ENCODE measurements at regions of chr12 and their contacts with region 1.

Region 1: DNA sequence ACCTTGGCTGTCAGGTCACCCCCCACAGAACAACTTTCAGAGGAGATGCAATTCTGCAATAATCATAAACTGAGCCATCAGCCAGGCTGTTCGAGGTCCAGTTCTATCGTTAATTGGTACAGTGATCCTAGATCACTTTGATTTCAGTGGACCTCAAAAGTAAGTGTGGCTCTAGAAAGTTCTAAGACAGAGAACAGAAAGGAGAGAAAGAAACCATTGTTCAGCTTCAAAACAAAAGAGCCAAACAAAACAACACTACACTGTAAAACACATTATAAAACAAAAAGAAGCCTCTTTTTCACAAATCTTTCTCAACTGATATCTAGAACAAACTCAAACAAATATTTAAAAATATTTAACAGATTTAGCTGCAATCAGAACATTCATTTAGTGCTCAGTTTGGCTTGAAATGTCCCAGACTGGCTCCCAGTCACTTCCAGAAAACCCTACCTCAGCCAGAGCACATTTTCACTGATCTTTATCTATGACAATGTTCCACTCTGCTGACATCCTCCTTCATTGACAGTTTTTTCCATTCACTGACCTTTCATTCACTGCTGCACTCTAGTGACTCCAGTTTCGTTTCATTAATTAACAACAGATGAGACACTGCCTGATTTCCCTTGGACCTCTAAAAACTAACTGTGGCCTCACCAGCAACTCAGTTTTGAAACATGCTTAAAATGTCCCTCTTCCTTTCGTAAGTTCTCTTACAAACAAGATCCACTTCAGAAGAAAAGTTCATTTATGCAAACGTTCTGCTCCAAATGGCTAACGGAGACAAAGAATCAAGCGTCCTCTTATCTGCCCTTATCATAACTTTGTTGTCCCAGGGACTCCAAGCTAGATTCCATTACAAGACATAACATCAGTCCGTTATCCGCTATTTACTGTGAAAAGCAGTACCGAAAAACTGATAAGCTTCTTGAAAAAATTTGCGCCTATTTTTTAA is 56.8 kb downstream of the DUSP16 start:
- DNase-seq: peak; percentile 63
- H3K4me3 Mint-ChIP-seq: peak overlapping the region; percentile 63
- H3K27ac Mint-ChIP-seq: peak overlapping the region; percentile 95
- H3K4me1 Mint-ChIP-seq: peaks cover 57% of the 10 kb centered on the region
- H3K27me3 Mint-ChIP-seq: no peaks in the 10 kb centered on the region

Region 2: DNA sequence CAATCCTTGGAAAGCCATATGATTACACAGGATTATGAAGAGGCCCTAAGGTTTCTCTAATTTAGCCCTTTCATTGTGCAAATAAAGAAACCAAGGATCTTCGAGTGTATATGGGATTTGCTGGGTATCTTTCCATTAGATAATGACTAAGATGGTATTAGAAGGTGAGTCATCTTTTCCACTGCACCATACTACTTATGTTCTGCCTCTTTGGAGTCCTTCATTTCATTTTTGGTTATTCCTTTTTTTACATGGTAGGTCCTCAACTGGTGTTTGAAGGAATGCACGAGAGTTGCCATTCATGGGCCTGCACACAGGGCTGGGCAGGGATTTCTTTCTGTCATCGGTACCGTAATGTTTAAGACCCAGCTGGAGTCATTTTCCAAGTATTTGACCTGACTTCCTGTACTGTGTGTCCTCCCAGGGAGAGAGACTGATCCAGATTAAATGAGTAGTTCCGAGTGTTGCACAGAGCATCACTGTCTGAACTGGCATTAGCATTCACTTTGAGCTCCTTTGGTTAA is 63.2 kb before region 1 on chr12:
- CTCF ChIA-PET with region 1: interaction called, 5 read pairs
- POLR2A ChIA-PET with region 1: interaction called, 9 read pairs
- intact Hi-C with region 1: loop called (anchors 1 kb)
- DNase-seq: no peak
- H3K4me3 Mint-ChIP-seq: peak overlapping the region; percentile 30
- H3K27ac Mint-ChIP-seq: peak overlapping the region; percentile 91
- H3K4me1 Mint-ChIP-seq: peaks cover 88% of the 10 kb centered on the region
- H3K27me3 Mint-ChIP-seq: no peaks in the 10 kb centered on the region

Region 3: GRCh38 chr12:12467688-12468261 is 38.0 kb before region 1 on chr12:
- CTCF ChIA-PET with region 1: interaction called, 12 read pairs
- POLR2A ChIA-PET with region 1: interaction called, 45 read pairs
- intact Hi-C with region 1: no loop called
- DNase-seq: peak; percentile 80
- H3K4me3 Mint-ChIP-seq: peak overlapping the region; percentile 49
- H3K27ac Mint-ChIP-seq: peak overlapping the region; percentile 97
- H3K4me1 Mint-ChIP-seq: peaks cover 84% of the 10 kb centered on the region
- H3K27me3 Mint-ChIP-seq: no peaks in the 10 kb centered on the region

Region 4: DNA sequence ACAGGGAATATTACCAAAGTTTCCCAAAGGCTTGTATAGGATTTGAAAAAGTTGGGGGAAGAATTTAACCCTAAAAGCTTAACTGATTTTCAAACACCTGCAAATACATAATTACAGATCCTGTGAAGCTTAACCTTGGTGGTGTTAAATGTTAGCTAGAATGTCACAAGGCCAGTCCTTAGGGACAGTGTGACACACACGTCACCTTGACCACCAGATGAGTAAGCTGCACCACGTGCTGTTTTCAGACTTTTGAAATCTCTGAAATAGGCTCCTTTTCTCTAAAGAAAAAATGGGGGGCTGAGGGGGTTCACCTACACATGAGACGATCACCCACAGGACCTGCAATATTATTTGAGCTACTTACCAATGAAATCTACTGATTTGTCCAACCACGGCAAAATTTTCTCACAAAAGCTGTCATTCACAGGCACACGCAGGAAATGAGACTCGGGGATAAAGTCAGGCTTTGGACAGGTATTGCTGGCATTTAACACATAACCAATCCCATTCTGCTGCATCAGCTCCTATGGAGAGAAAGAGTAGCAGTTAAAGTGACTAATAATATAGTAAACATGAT is 19.1 kb before region 1 on chr12:
- CTCF ChIA-PET with region 1: interaction called, 25 read pairs
- POLR2A ChIA-PET with region 1: interaction called, 76 read pairs
- intact Hi-C with region 1: loop called (anchors 1 kb)
- DNase-seq: peak; percentile 59
- H3K4me3 Mint-ChIP-seq: peak overlapping the region; percentile 6
- H3K27ac Mint-ChIP-seq: peak overlapping the region; percentile 99
- H3K4me1 Mint-ChIP-seq: peaks cover 56% of the 10 kb centered on the region
- H3K27me3 Mint-ChIP-seq: no peaks in the 10 kb centered on the region

Region 5: GRCh38 chr12:12611512-12612306 is 105.9 kb after region 1 on chr12 and contains the start of gene CREBL2:
- CTCF ChIA-PET with region 1: no interaction called
- POLR2A ChIA-PET with region 1: no interaction called
- intact Hi-C with region 1: loop called (anchors 2 kb)
- DNase-seq: peak; percentile 92
- H3K4me3 Mint-ChIP-seq: peak within 1 kb of the TSS; percentile 82
- H3K27ac Mint-ChIP-seq: peak within 1 kb of the TSS; percentile 95
- H3K4me1 Mint-ChIP-seq: peaks cover 54% of the 10 kb centered on the region
- H3K27me3 Mint-ChIP-seq: no peaks in the 10 kb centered on the region
- total RNA-seq, gene CREBL2: 30.4 to 32.2 TPM

Region 6: GRCh38 chr12:12696562-12697383 is 191.0 kb after region 1 on chr12:
- CTCF ChIA-PET with region 1: no interaction called
- POLR2A ChIA-PET with region 1: interaction called, 5 read pairs
- intact Hi-C with region 1: loop called (anchors 1 kb)
- DNase-seq: peak; percentile 92
- H3K4me3 Mint-ChIP-seq: peak overlapping the region; percentile 92
- H3K27ac Mint-ChIP-seq: peak overlapping the region; percentile 98
- H3K4me1 Mint-ChIP-seq: peaks cover 65% of the 10 kb centered on the region
- H3K27me3 Mint-ChIP-seq: no peaks in the 10 kb centered on the region

Region 7: GRCh38 chr12:12749433-12749832 is 243.6 kb after region 1 on chr12:
- CTCF ChIA-PET with region 1: no interaction called
- POLR2A ChIA-PET with region 1: no interaction called
- intact Hi-C with region 1: no loop called
- DNase-seq: no peak
- H3K4me3 Mint-ChIP-seq: no peak overlapping the region
- H3K27ac Mint-ChIP-seq: no peak overlapping the region
- H3K4me1 Mint-ChIP-seq: no peaks in the 10 kb centered on the region
- H3K27me3 Mint-ChIP-seq: no peaks in the 10 kb centered on the region